ENCODE measurements at regions of chr14 and their contacts with region 1.

Region 1: DNA sequence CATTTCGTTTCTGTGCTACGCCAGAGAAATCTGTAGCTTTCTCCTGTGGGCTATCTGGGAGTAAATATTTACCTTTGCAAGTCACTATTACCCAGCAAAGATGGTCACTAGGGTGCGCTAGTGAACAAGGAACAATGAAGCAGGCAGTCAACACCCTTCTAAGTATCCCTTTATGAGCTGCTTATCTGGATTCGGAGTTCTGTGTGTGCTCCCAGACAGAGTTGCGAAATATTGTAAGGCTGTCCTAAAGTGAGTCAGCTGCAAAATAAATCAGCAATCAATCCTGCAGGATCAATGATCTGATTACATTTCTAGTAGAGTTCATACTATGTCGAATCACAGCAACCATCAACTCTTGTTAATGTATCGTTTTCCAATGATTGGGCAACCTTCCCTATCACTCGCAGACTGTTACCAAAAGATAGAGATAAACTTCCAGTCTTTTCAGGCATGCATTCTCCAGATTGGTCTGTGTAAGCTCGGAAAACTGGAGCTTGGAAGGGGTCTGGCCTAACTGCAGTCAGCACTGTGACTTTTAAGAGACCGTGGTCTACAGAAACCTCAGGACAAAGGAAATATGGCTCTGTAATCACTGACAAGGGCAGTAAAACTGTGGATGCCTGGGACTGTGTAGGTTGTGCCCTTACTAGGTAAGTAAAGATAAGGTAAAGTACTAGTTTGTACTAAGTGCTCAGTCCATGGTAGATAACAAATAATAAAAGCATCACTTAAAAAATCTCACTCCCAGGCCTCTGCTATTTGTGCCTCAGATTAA is 133.5 kb downstream of the KCNK10 start:
- DNase-seq: peak; percentile 68
- ATAC-seq: peak; percentile 67
- H3K4me3 ChIP-seq: peak overlapping the region in 2 of 5 experiments; percentile 27 to 28
- H3K4me3 Mint-ChIP-seq: peak overlapping the region; percentile 80
- H3K27ac ChIP-seq: no peak overlapping the region
- H3K27ac Mint-ChIP-seq: no peak overlapping the region
- H3K4me1 ChIP-seq: peaks cover 0 to 6% of the 10 kb centered on the region in 2 donors
- H3K4me1 Mint-ChIP-seq: peaks cover 6% of the 10 kb centered on the region
- H3K27me3 ChIP-seq: peaks cover 0 to 7% (median 2%) of the 10 kb centered on the region in 4 experiments
- H3K27me3 Mint-ChIP-seq: peaks cover 21% of the 10 kb centered on the region
- CTCF ChIP-seq: peak; percentile 76

Region 2: DNA sequence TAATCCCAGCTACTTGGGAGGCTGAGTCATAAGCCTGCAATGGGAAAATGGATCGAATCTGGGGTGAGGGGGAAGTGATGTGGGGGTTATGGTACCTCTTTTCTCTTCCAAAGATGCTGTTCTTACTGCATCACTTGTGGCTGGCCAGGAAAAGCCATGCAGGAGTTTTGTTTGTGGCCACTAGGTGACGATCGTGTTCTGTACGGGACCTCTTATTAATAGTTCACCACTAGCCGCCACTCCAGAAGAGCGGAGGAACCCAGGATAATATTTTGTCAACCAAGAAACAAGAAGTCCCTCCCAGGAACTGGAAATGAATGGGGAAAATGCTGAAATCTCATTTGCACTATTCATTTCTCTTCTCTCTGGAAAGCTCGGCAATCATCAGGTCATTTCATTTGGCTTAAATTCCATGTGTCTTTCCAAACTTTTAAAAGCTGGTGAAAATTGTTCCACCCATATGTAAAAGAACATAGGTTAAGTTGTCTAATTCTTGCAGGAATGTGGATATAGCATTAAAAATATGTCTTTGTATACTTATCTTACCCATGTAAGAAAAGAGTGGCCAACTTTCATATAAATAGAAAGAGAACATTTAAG is 175.8 kb before region 1 on chr14:
- CTCF ChIA-PET with region 1: interaction called, 19 read pairs
- POLR2A ChIA-PET with region 1: no interaction called
- intact Hi-C with region 1: no loop called
- DNase-seq: peak; percentile 72
- ATAC-seq: peak; percentile 86
- H3K4me3 ChIP-seq: no peak overlapping the region
- H3K4me3 Mint-ChIP-seq: no peak overlapping the region
- H3K27ac ChIP-seq: no peak overlapping the region
- H3K27ac Mint-ChIP-seq: no peak overlapping the region
- H3K4me1 ChIP-seq: peaks cover 2 to 13% of the 10 kb centered on the region in 2 donors
- H3K4me1 Mint-ChIP-seq: peaks cover 44% of the 10 kb centered on the region
- H3K27me3 ChIP-seq: no peaks in the 10 kb centered on the region
- H3K27me3 Mint-ChIP-seq: no peaks in the 10 kb centered on the region
- CTCF ChIP-seq: peak; percentile 84

Region 3: DNA sequence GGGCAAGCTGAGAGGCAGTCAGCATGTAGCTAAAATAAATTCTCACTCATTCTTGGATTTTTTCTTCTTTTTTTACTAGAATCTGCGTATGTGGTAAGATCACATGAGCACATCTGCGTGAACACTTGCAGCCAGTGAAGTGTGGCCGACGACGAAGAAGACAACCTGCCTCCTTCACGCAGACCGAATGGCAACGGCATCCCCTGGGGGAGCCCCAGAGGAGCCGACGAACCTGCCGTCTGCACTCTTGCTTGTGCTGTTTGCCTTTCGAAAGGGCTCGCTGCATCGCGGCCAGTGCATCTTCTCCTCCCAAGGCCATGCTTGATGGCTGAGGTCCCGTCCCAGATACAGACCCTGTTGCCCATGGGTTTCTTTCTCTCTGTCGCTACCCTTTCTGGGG is 19.7 kb after region 1 on chr14:
- CTCF ChIA-PET with region 1: interaction called, 23 read pairs
- POLR2A ChIA-PET with region 1: no interaction called
- intact Hi-C with region 1: no loop called
- DNase-seq: peak; percentile 58
- ATAC-seq: peak; percentile 90
- H3K4me3 ChIP-seq: peak overlapping the region in 2 of 5 experiments; percentile 1 to 2
- H3K4me3 Mint-ChIP-seq: peak overlapping the region; percentile 81
- H3K27ac ChIP-seq: no peak overlapping the region
- H3K27ac Mint-ChIP-seq: peak overlapping the region; percentile 85
- H3K4me1 ChIP-seq: no peaks in the 10 kb centered on the region
- H3K4me1 Mint-ChIP-seq: peaks cover 39% of the 10 kb centered on the region
- H3K27me3 ChIP-seq: peaks cover 0 to 5% (median 0%) of the 10 kb centered on the region in 4 experiments
- H3K27me3 Mint-ChIP-seq: peaks cover 8% of the 10 kb centered on the region
- CTCF ChIP-seq: no peak

Region 4: GRCh38 chr14:88233915-88234314 is 44.3 kb after region 1 on chr14:
- CTCF ChIA-PET with region 1: interaction called, 87 read pairs
- POLR2A ChIA-PET with region 1: no interaction called
- intact Hi-C with region 1: loop called (anchors 1 kb)
- DNase-seq: peak; percentile 9
- ATAC-seq: no peak
- H3K4me3 ChIP-seq: no peak overlapping the region
- H3K4me3 Mint-ChIP-seq: no peak overlapping the region
- H3K27ac ChIP-seq: no peak overlapping the region
- H3K27ac Mint-ChIP-seq: no peak overlapping the region
- H3K4me1 ChIP-seq: no peaks in the 10 kb centered on the region
- H3K4me1 Mint-ChIP-seq: no peaks in the 10 kb centered on the region
- H3K27me3 ChIP-seq: peaks cover 0 to 3% (median 0%) of the 10 kb centered on the region in 4 experiments
- H3K27me3 Mint-ChIP-seq: peaks cover 17% of the 10 kb centered on the region
- CTCF ChIP-seq: peak; percentile 31

Region 5: DNA sequence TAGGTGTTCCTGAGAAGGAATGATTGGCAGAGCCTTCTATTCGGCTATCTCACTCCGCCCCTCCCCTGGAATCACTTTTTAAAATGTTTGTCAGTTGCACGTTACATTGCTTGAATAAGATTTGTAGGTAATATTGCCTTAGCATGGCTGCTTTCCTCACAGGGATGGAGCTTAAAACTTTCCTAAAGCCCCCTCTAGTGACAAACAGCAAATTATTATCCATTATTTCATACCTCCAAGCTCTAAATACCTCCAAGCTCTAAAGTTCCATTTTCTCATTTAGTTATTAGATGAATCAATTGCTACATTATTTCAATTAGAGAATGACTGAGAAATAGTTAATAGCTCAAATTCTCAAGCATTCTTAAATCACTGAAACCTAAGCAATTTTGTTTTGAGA is 190.8 kb after region 1 on chr14:
- CTCF ChIA-PET with region 1: interaction called, 33 read pairs
- POLR2A ChIA-PET with region 1: no interaction called
- intact Hi-C with region 1: loop called (anchors 1 kb)
- DNase-seq: no peak
- ATAC-seq: no peak
- H3K4me3 ChIP-seq: no peak overlapping the region
- H3K4me3 Mint-ChIP-seq: no peak overlapping the region
- H3K27ac ChIP-seq: no peak overlapping the region
- H3K27ac Mint-ChIP-seq: no peak overlapping the region
- H3K4me1 ChIP-seq: peaks cover 0 to 4% of the 10 kb centered on the region in 2 donors
- H3K4me1 Mint-ChIP-seq: peaks cover 9% of the 10 kb centered on the region
- H3K27me3 ChIP-seq: peaks cover 0 to 4% (median 0%) of the 10 kb centered on the region in 4 experiments
- H3K27me3 Mint-ChIP-seq: peaks cover 13% of the 10 kb centered on the region
- CTCF ChIP-seq: no peak